ENCODE measurements at regions of chr5 and their contacts with region 1.

Region 1: DNA sequence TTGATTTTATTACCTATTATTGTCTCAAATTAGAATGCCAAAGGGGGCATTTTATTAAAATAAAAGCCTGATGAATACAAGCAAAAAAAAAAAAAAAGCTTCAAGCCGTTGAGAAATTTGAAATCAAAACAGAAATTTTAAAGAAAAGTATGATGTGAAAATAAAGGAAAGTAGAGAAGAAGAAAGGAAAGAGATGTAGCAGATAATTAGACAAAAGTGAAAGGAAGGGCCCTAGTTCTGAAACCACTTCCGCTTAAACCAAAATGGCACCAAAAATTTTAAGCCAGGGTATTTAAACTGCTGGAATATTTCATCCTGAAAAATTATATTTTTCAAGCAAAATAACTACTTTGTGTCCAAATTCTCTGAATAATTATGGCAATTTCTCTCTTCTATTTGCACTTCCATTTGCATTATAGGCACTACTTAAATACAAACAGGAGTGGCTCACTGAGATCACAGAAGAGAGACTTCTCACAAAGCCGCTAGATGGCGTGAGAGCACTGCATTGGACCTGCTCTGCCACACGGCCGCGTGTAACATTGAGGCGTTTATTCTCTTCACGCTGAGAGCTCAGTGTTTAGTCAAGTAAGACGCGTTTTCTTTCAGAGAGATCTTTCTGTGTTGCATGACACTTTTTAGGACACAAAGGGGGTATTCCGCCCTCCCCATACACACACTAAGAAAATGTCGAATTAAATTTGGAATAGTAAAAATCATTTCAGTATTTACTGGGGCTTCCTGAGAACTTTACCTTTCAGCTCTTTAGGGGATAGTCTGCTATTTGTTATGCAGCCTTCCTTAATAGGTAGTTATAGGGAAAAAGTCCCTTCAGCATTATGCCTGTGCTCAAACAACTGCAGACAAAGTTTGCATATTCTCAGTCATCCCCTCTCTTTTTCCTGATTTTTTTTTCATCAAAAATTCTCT is 368.4 kb upstream of the CCNH start:
- DNase-seq: peak; percentile 66 to 84
- ATAC-seq: peak; percentile 88 to 98 (median 95)
- H3K4me3 ChIP-seq: no peak overlapping the region
- H3K27ac ChIP-seq: no peak overlapping the region
- H3K4me1 ChIP-seq: no peaks in the 10 kb centered on the region
- H3K27me3 ChIP-seq: peaks cover 0 to 96% (median 82%) of the 10 kb centered on the region in 7 donors
- CTCF ChIP-seq: peak; percentile 82 to 97 (median 94)

Region 2: DNA sequence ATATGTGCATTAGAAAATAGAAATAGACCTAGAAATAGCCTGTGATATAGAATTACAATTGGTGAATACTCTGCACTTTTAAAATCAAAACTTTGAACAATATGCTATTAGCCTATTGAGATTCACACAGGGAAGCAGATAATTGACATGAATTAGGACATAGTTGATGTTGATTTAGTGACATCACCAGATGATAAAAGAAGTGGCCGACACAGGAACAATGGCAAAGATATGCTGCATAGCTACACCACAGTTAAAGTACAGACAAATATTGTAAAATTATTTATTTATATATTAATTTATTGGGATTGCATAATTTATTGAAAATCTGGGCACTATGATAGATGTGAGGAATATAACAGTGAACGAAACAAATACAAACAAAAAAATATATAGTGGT is 106.9 kb before region 1 on chr5:
- intact Hi-C with region 1: no loop called
- DNase-seq: no peak
- ATAC-seq: no peak
- H3K4me3 ChIP-seq: no peak overlapping the region
- H3K27ac ChIP-seq: no peak overlapping the region
- H3K4me1 ChIP-seq: no peaks in the 10 kb centered on the region
- H3K27me3 ChIP-seq: no peaks in the 10 kb centered on the region
- CTCF ChIP-seq: no peak

Region 3: DNA sequence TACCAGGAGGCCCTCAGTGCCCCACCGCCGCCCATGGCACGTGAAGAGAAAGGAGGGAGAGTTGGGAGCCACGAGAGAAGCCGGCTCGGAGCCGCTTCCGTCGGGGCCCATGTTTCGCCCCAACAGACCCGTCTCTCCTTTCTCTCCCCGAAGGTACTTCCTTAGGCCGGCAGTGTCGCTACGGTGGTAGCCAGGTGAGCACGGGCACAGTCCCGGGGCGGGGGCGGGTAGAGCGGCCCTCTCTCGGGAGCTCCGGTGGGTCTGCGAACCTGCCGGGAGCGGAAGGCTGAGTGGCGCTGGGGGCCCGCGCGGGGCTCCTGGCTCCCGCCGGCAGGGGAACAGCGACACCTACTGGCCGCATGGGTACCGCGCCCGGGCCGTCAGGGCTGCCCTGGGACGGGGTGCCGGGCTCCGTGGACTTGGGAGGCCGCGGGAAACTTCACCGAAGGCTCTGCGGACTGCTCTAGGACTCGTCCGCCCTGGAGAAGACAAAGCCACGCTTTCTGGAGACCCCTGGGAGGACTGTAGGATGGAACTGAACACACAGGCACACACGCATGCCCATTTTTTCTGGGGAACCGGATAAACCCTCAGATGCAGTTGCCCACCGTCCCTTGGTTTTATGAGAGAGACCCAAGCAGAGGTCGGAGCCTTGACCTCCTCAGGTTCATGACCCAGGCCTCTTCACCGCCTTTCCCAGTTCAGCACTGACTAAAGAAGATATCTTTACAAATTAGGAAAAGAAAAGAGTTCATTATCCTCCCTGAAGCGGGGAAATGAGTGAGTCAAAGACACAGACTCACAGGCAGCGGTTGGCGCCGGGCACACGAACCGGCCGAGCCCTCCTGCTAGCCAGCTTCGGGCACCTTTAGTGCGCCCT is 899.4 kb after region 1 on chr5:
- intact Hi-C with region 1: loop called in 9 of 10 experiments (anchors 2 to 5 kb)
- DNase-seq: peak; percentile 57 to 77
- ATAC-seq: peak; percentile 87 to 95 (median 92)
- H3K4me3 ChIP-seq: peak overlapping the region in 9 of 10 donors; percentile 18 to 52 (median 41)
- H3K27ac ChIP-seq: no peak overlapping the region
- H3K4me1 ChIP-seq: peaks cover 3 to 31% (median 18%) of the 10 kb centered on the region in 9 donors
- H3K27me3 ChIP-seq: peaks cover 50 to 100% (median 99%) of the 10 kb centered on the region in 7 donors
- CTCF ChIP-seq: peak; percentile 86 to 99 (median 96)

Region 4: DNA sequence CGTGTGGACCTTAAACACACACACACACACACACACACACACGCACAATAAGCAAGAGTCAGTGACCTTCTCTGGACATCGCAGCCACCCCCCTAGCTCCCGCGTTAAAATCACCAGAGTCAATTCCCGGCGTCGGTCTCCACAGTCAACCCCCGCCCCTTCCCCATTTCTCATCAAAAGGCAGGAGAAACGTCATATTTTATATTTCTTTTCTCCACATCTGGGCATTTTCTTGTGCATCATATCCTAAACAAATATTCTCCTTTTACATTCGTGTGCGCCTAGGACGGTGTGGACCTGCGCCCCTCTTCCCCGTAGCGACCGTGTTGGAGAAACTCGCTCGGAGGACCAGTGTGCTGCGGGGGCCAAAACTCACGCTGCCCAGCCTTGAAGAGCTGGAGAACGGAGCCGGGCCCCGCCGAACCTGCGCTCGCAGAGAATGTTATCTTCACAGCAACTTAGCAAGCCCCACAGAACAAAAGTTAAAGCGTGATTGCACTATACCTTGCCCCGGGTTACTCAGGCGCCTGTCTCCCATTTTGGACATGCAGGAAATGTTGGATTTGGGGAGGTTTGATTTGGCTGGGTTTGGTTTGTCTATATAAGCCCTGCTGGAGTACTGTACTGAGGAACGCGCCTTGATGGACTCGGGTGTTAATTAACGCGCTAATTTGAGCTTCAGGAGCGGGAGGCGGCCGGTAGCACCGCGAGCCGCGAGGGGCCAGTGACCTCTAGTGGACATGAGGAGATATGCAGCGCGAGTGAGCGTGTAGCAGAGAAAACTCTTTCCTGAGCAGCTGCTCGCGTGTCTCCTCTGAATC is 909.5 kb after region 1 on chr5:
- intact Hi-C with region 1: loop called in 5 of 10 experiments (anchors 1 to 5 kb)
- DNase-seq: peak; percentile 63 to 68
- ATAC-seq: peak; percentile 73 to 93 (median 90)
- H3K4me3 ChIP-seq: peak overlapping the region in 8 of 10 donors; percentile 15 to 39 (median 30)
- H3K27ac ChIP-seq: no peak overlapping the region
- H3K4me1 ChIP-seq: peaks cover 0 to 47% (median 35%) of the 10 kb centered on the region in 9 donors
- H3K27me3 ChIP-seq: peaks cover 31 to 100% (median 100%) of the 10 kb centered on the region in 7 donors
- CTCF ChIP-seq: peak; percentile 94 to 98 (median 96)

Measured in heart right ventricle (tissue), 16 donors.